SK-N-SH (cell line): ENCODE measurements at regions of chr9 and their contacts with region 1.

Region 1: DNA sequence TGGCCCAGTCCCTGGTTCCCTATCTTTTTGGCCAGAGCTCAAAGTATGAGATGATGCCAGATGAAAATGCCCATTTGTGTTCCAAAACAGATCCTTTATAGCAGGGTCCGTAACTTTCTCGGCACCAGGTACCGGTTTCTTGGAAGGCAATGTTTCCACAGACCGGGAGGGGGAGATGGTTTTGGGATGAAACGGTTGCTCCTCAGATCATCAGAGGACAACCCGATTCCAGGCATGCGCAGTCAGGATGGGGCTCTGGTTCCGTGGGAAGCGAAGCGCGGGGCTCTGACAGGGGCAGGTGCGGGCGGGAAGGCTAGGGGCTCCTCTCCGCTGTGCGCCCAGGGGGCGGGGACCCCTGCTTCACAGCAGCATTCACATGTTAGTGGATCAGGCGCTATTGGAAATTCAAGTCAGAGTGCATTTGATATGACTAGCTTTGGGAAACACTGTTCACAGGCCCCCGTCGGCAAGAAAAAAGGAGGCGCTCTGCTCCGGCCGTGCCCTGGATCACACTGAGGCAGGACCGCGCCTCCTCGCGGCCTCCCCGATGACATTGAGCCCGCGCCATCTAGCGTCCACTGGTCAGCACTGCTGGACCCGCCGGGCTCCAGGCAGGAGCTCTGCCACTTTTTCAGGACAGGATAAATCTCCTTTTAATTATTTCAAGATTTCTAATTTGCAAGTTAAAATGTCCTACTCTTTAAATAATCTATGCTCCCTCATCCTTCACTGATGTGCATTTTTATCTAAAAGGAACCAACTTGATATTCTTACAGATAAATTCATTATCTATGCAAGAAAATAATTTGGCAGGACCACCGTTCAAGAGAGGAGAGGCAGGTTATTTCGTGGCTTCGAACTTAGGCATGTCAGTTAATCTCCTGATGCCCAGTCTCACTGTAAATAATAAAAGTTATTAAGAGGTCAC is 190.0 kb downstream of the FANCC start:
- DNase-seq: peak; percentile 84
- H3K4me3 ChIP-seq: peak overlapping the region in 1 of 2 experiments; percentile 47; a peak in 1 of 4 replicates
- H3K27ac ChIP-seq: peak overlapping the region in 1 of 2 experiments; percentile 69; a peak in 1 of 4 replicates
- H3K4me1 ChIP-seq: peaks cover 0 to 74% of the 10 kb centered on the region in 2 experiments; a peak in 2 of 4 replicates
- H3K27me3 ChIP-seq: no peaks in the 10 kb centered on the region
- CTCF ChIP-seq: peak; percentile 98
- EP300 ChIP-seq: no peak; a peak in 1 of 4 replicates
- RAD21 ChIP-seq: peak; percentile 88

Region 2: GRCh38 chr9:94672811-94673487 is 454.6 kb before region 1 on chr9:
- CTCF ChIA-PET with region 1: interaction called, 229 read pairs
- POLR2A ChIA-PET with region 1: no interaction called
- DNase-seq: no peak
- H3K4me3 ChIP-seq: no peak overlapping the region
- H3K27ac ChIP-seq: peak overlapping the region; percentile 29 to 73; a peak in 3 of 4 replicates
- H3K4me1 ChIP-seq: 0 out of 4 replicates have a peak, but pooled peaks cover 0 to 12% of the 10 kb centered on the region in 2 experiments
- H3K27me3 ChIP-seq: no peaks in the 10 kb centered on the region
- CTCF ChIP-seq: no peak
- EP300 ChIP-seq: peak in 1 of 2 experiments; percentile 47; a peak in 1 of 4 replicates
- RAD21 ChIP-seq: no peak

Region 3: DNA sequence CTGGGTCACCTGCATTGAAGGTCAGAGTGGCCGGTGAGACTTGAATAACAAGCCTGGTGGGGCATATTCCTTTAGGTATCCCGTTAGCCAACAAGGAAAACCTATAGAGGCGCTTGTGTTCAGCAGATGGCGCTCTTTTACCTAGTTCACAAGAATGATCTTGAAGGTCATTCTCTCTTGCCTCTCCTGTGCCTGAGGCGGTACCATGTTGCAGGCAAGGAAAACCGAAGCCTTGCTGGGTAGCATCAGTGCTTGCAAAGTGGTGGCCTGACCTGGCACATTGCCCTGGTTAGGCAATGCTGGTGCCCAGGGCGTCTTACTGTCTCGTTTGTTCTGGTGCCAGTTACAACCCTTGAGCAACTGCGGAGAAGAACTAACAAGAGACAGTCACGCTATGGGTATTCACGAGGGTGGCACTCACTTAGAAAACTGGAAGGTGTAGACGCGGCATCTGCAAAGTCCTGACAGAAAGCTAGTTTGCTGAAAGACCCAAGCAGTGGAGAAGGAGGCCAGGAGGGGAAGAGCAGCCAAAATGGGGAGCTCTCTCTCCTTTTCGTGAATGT is 344.3 kb before region 1 on chr9:
- CTCF ChIA-PET with region 1: interaction called, 124 read pairs
- POLR2A ChIA-PET with region 1: interaction called, 6 read pairs
- DNase-seq: peak; percentile 68
- H3K4me3 ChIP-seq: peak overlapping the region in 1 of 2 experiments; percentile 5; a peak in 1 of 4 replicates
- H3K27ac ChIP-seq: peak overlapping the region; percentile 93 to 97
- H3K4me1 ChIP-seq: peaks cover 8 to 40% of the 10 kb centered on the region in 2 experiments
- H3K27me3 ChIP-seq: no peaks in the 10 kb centered on the region
- CTCF ChIP-seq: peak; percentile 78
- EP300 ChIP-seq: peak in 1 of 2 experiments; percentile 82; a peak in 2 of 4 replicates
- RAD21 ChIP-seq: peak; percentile 92

Region 4: DNA sequence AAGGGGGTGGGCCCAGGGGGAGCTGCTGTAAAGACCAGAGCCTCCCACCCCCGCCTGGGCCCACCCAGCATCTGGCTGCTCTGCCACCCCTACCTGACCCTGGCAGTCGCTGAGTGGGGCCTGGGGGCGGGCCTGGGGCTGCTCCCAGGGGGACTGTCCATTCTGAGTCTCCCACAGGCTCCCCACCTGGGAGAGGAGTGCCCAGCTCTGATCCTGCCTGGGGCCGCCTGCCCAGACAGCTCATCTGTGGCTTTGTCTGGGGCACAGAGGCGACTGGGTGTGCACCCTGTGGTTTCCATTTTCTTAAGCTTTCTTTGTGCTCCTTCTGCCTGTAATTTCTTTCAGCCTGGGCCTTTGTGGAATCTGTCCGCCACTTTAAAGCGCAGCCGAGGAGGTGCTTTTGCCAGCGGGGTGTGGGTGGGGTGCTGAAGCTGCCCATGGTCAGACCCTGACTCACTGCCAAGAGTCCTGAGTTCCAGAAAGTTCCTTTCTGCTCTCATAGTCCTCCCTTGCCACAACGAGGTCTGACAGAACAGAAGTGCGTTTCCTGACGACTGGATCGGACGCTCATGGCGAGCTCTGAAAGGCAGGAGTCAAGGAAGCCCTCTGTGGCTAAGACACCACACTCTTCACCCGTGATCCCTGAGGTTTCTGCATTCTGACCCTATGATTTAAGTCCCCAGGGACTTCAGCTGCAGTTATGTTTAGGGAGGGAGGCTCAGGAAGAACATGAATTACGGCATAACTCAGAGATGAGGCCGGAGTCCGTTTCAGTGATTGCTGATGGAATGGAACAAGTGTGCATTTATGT is 35.0 kb before region 1 on chr9:
- CTCF ChIA-PET with region 1: interaction called, 53 read pairs
- POLR2A ChIA-PET with region 1: interaction called, 4 read pairs
- DNase-seq: peak; percentile 68
- H3K4me3 ChIP-seq: no peak overlapping the region
- H3K27ac ChIP-seq: peak overlapping the region; percentile 20 to 91; a peak in 3 of 4 replicates
- H3K4me1 ChIP-seq: peaks cover 11 to 92% of the 10 kb centered on the region in 2 experiments; a peak in 3 of 4 replicates
- H3K27me3 ChIP-seq: no peaks in the 10 kb centered on the region
- CTCF ChIP-seq: no peak
- EP300 ChIP-seq: no peak
- RAD21 ChIP-seq: no peak

Region 5: DNA sequence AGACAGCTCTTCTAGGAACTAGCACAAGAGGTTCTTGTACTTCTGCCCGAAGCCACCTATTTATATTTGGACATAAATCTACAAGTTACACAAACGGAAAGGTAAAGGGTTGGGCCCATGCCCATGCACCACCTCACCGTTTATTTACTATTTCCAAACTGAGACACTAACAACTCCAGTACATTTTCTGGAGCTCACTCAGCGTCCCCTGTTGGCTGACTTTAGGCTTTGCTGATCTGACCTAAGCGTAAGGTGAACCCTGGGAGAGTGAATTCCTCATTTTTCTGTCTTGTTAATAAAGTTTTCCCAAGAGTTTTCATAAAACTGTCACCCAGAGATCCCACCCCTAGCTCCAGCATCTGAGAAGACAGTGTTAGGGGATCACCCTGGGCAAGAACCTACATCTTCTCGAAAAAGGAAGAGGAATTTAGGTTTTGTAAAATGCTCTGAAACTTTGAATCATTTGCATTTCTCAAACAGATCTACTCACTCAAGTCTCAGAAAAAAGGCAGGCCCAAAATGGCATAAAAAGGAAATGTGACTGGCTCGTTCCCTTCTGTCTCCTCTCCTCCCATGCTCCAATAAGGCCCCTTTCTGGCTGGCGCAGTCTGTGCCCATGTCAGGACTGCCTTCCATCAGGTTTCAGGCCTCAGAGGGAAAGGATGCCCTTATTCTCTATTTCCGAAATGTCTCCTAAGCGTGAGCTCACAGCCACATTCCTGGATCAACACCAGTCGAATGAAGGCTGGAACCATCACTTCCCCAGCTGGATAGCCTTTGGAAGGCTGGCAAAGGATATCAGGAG is 11.3 kb before region 1 on chr9:
- CTCF ChIA-PET with region 1: interaction called, 33 read pairs
- POLR2A ChIA-PET with region 1: no interaction called
- DNase-seq: no peak
- H3K4me3 ChIP-seq: no peak overlapping the region
- H3K27ac ChIP-seq: peak overlapping the region in 1 of 2 experiments; percentile 31; a peak in 1 of 4 replicates
- H3K4me1 ChIP-seq: peaks cover 0 to 11% of the 10 kb centered on the region in 2 experiments; a peak in 2 of 4 replicates
- H3K27me3 ChIP-seq: no peaks in the 10 kb centered on the region
- CTCF ChIP-seq: peak; percentile 23
- EP300 ChIP-seq: no peak
- RAD21 ChIP-seq: 0 out of 2 replicates have a peak, but pooled peaks have one; percentile 16

Region 6: DNA sequence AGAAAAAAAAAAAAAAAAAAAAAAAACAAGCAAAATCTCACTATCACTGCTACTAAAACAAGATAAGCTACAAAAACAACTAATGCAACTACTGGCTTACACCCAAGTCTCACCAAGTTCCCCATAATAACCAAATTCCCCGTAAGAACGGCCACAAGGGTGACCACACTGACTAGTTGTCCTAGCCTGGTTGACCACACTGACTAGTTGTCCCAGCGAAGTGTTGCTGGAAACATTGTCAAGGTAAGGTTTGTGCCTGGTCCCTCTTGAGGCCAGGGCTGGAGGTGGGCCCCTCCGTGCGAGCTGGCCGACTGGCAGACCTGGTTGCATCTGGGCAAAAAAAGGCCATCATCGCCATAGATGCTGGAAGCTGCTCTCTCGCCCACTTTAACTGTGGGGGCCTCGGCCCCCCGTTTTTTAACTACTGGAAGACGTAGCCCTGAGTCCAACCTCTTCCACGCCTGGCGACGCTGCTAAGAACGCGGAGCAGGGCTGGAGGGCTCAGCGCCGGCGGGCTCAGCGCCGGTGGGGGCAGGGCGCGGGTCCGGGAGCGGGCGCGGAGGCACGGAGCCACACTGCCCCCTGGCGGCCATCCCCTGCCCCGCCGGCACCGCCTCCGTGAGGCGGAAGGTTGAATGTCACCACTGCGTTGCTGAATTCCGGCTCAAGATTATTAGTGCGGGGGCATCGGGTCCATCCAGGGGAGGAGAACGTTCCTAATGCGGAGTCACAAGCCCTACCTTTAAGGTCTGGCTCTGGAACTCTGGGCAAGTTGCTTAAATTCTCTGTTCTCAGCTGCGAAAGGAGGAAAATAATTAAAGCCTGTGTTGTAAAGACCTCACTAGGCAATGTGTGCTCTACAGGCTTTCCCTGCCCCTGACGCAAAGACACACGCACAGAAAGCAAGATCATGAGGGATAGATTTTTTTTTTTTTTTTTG is 1090.5 kb after region 1 on chr9:
- CTCF ChIA-PET with region 1: interaction called, 10 read pairs
- POLR2A ChIA-PET with region 1: no interaction called
- DNase-seq: peak; percentile 93
- H3K4me3 ChIP-seq: peak overlapping the region; percentile 39 to 54
- H3K27ac ChIP-seq: peak overlapping the region in 1 of 2 experiments; percentile 94; a peak in 2 of 4 replicates
- H3K4me1 ChIP-seq: peaks cover 0 to 38% of the 10 kb centered on the region in 2 experiments; a peak in 2 of 4 replicates
- H3K27me3 ChIP-seq: peaks cover 9% of the 10 kb centered on the region; the same call in 1 of the 2 replicates
- CTCF ChIP-seq: peak; percentile 90
- EP300 ChIP-seq: no peak
- RAD21 ChIP-seq: peak; percentile 86